H1 (cell line): ENCODE measurements at regions of chr7 and their contacts with region 1.

Region 1: DNA sequence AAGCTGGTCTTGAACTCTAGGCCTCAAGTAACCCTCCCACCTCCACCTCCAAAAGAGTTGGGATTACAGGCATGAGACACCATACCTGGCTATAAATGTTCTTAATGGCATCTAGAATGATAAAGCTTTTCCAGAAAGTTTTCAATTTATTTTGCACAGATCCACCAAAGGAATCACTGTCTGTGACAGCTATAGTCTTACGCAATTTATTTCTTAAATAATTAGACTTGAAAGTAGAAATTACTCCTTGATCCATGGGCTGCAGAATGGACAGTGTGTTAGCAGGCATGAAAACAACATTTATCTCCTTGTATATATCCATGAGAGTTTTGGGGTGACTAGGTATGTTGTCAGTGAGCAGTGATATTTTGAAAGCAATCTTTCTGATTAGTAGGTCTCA is 33.8 kb downstream of the GALNT11 start:
- DNase-seq: no peak
- H3K4me3 ChIP-seq: no peak overlapping the region
- H3K27ac ChIP-seq: no peak overlapping the region
- H3K4me1 ChIP-seq: peaks cover 0 to 9% (median 3%) of the 10 kb centered on the region in 4 experiments; a peak in 3 of 7 replicates
- H3K27me3 ChIP-seq: no peaks in the 10 kb centered on the region
- CTCF ChIP-seq: no peak
- EP300 ChIP-seq: no peak
- POLR2A ChIP-seq: no peak
- RAD21 ChIP-seq: no peak

Region 2: GRCh38 chr7:152076324-152076866 is 17.1 kb after region 1 on chr7:
- CTCF ChIA-PET with region 1: interaction called, 14 read pairs
- POLR2A ChIA-PET with region 1: no interaction called
- DNase-seq: peak in 1 of 2 experiments; percentile 77
- H3K4me3 ChIP-seq: no peak overlapping the region
- H3K27ac ChIP-seq: no peak overlapping the region
- H3K4me1 ChIP-seq: peaks cover 1 to 25% (median 17%) of the 10 kb centered on the region in 4 experiments; a peak in 6 of 7 replicates
- H3K27me3 ChIP-seq: no peaks in the 10 kb centered on the region
- CTCF ChIP-seq: peak; percentile 27 to 74 (median 63)
- EP300 ChIP-seq: no peak
- POLR2A ChIP-seq: no peak
- RAD21 ChIP-seq: peak; percentile 60 to 74

Region 3: DNA sequence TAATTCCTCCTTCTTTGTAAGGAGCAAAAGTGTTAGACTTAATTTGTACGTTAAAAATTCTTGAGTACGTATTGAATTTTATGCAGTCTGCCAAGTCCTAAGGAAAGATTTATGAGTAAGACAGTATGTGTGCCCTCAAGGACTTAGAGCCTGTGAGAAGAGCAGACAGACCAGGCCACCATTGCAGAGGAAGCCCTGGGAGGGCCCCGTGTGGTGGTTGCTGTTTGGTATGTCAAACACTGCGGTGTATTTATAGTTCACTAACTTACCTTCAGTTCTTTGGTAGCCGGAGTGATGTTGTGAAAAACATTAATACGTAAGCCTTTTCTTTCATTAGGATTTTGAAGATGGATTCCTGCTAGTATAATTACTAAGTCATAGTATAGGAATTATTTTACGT is 49.0 kb after region 1 on chr7:
- CTCF ChIA-PET with region 1: no interaction called
- POLR2A ChIA-PET with region 1: no interaction called
- DNase-seq: no peak
- H3K4me3 ChIP-seq: no peak overlapping the region
- H3K27ac ChIP-seq: no peak overlapping the region
- H3K4me1 ChIP-seq: no peaks in the 10 kb centered on the region
- H3K27me3 ChIP-seq: peaks cover 0 to 1% (median 0%) of the 10 kb centered on the region in 4 experiments; a peak in 1 of 7 replicates
- CTCF ChIP-seq: no peak
- EP300 ChIP-seq: no peak
- POLR2A ChIP-seq: no peak
- RAD21 ChIP-seq: peak; percentile 27 to 43; a peak in 3 of 4 replicates